Common myeloid progenitor, CD34-positive (primary cell): ENCODE measurements at regions of chr20 and their contacts with region 1.

Region 1: DNA sequence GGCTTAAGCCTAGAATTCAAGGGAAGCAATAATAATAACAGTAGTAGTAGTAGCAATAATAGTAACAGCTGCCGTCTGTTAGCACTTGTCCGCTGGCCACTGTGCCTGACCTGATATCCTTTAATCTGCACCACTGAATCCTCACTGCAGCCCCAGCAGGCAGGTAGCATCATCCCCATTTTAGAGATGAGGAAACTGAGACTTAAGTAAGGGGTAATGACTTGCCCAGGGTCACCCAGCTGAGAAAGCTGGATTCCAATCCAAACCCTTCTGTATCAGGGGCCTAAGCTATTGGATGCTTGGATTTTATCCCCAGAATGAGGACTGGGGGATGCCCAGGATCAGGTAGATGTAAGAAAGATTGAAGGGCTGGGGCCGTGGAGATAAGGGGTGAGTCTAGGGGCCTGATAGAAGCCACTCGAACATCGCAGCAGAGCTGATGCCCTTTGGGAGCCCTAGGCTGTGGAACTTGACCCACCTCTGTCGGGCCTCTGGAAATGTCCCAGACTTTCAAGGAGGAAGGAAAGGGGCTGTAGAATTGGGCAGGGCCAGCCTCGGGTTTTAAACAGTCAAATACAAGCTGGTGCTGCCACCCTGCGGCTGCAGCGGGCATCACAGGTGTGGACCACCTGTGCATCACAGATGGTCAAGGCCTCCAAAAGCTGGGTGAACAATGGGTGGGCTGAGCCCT is 102.1 kb upstream of the MYL9 start:
- DNase-seq: peak; percentile 53 to 66 (median 55)
- H3K4me3 ChIP-seq: no peak overlapping the region
- H3K27ac ChIP-seq: no peak overlapping the region
- H3K4me1 ChIP-seq: peaks cover 0 to 5% (median 1%) of the 10 kb centered on the region in 4 experiments
- H3K27me3 ChIP-seq: peaks cover 0 to 16% (median 0%) of the 10 kb centered on the region in 5 experiments

Region 2: DNA sequence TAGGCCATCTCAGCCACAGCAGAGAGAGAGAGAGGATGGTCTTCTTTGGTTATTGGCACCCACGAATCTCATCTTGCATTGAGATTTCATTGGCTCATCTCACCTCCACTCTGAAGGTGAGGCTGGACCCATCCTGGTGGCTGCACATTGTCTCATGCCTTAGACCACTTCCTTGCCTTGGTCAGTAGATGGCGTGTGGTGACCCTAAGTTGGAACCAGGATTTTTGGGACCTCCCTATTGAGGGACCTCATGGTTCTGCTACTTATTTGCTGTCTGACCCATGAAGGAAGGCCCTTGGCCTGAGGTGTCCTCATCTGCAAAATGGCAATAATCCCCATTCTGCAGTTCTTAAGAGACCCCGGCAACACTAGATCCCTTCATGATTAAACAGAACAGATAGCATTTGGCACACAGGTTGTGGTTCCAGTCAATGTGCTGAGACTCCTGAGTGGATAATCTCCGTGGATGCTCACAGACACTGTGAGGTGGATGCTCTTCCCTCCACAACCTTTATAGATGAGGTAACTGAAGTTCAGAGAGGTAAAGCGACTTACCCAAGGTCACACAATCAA is 224.4 kb before region 1 on chr20:
- CTCF ChIA-PET with region 1: interaction called, 44 read pairs
- POLR2A ChIA-PET with region 1: interaction called, 3 read pairs
- DNase-seq: peak; percentile 41 to 56 (median 55)
- H3K4me3 ChIP-seq: no peak overlapping the region
- H3K27ac ChIP-seq: no peak overlapping the region
- H3K4me1 ChIP-seq: peaks cover 0 to 6% (median 0%) of the 10 kb centered on the region in 4 experiments
- H3K27me3 ChIP-seq: no peaks in the 10 kb centered on the region